Transverse colon (tissue), 4 donors: ENCODE measurements at regions of chr9 and their contacts with region 1.

Region 1: DNA sequence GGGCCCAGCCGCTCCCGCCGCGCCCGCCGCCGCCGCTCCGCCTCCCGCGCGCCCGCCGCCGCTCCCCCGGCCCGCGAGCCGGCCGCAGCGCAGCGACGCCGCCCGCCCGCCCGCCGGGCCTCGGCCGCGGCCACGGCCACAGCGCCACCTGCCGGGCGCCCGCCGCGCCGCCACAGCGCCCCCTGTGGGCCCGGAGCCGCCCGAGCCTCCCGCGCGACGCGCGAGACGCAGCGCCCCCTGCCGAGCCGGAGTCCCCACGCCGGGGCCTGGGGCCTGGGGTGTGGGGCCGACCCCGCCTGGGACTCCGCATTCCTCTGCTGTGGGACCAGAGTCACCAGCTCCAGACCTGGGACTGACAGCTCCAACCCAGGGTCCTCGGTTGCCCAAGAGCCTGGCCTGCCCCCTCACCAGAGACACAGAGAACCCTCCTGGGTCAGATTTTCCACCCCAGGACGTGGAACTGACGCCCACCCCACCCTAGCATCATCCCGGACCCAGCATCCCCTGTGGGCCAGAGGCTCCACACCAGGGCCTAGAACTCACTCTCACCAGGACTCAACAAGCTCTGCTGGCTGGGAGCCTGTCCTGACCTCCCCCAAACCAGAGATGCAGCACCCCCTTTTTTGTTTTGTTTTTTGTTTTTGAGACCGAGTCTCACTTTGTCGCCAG is at the start of gene RAPGEF1:
- DNase-seq: peak; percentile 77
- H3K4me3 ChIP-seq: peak within 1 kb of the TSS; percentile 21 to 83 (median 72)
- H3K27ac ChIP-seq: peak within 1 kb of the TSS; percentile 86 to 93 (median 88)
- H3K4me1 ChIP-seq: peaks cover 26 to 44% (median 32%) of the 10 kb centered on the region in 4 donors
- H3K27me3 ChIP-seq: no peaks in the 10 kb centered on the region
- CTCF ChIP-seq: peak; percentile 66 to 88 (median 85)
- EP300 ChIP-seq: no peak
- POLR2A ChIP-seq: no peak
- total RNA-seq, gene RAPGEF1: 49.8 to 86.0 (median 55.1) TPM

Region 2: GRCh38 chr9:131266266-131267229 is 473.6 kb before region 1 on chr9:
- in situ Hi-C with region 1: no loop called
- intact Hi-C with region 1: no loop called
- DNase-seq: no peak
- H3K4me3 ChIP-seq: no peak overlapping the region
- H3K27ac ChIP-seq: peak overlapping the region in 3 of 4 donors; percentile 1 to 37 (median 3)
- H3K4me1 ChIP-seq: peaks cover 0 to 22% (median 3%) of the 10 kb centered on the region in 4 donors
- H3K27me3 ChIP-seq: no peaks in the 10 kb centered on the region
- CTCF ChIP-seq: no peak
- EP300 ChIP-seq: no peak
- POLR2A ChIP-seq: no peak

Region 3: DNA sequence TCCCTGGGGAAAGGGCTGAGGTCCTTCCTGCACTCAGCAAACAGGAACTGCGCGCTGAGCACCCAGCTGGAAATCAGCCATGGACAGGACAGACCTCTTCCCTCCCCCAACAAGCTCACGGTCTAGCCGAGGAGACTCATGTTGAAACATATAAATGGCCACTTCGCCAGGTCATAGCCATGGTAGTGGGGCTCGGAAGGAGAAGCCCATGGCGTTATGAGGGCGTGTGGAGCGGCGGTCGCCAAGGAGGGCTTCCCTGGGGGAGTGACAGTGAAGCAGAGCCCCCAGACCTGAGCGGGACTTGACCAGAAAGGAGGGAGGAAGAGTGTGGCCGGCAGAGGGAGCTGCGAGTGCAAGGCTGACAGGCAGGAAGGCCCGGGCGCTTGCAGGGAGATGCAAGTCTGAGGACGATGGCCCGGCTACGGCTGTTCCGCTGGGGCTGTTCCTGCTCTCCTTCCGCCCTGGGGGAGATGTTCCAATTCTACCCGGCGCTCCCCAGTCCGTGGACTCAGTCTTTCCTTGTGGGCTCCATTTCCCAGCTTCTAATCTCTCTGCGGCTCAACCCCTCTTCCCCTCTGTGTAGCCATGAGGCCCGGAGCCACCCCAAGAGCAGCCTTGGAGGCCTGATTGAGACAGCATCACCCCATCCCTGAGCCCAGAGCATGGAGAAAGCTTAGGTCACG is 390.1 kb before region 1 on chr9:
- in situ Hi-C with region 1: loop called in 3 of 4 experiments (anchors 25 kb)
- intact Hi-C with region 1: no loop called
- DNase-seq: peak; percentile 89
- H3K4me3 ChIP-seq: peak overlapping the region in 1 of 4 donors; percentile 20
- H3K27ac ChIP-seq: no peak overlapping the region
- H3K4me1 ChIP-seq: peaks cover 0 to 10% (median 7%) of the 10 kb centered on the region in 4 donors
- H3K27me3 ChIP-seq: no peaks in the 10 kb centered on the region
- CTCF ChIP-seq: peak; percentile 76 to 85 (median 84)
- EP300 ChIP-seq: no peak
- POLR2A ChIP-seq: no peak

Region 4: DNA sequence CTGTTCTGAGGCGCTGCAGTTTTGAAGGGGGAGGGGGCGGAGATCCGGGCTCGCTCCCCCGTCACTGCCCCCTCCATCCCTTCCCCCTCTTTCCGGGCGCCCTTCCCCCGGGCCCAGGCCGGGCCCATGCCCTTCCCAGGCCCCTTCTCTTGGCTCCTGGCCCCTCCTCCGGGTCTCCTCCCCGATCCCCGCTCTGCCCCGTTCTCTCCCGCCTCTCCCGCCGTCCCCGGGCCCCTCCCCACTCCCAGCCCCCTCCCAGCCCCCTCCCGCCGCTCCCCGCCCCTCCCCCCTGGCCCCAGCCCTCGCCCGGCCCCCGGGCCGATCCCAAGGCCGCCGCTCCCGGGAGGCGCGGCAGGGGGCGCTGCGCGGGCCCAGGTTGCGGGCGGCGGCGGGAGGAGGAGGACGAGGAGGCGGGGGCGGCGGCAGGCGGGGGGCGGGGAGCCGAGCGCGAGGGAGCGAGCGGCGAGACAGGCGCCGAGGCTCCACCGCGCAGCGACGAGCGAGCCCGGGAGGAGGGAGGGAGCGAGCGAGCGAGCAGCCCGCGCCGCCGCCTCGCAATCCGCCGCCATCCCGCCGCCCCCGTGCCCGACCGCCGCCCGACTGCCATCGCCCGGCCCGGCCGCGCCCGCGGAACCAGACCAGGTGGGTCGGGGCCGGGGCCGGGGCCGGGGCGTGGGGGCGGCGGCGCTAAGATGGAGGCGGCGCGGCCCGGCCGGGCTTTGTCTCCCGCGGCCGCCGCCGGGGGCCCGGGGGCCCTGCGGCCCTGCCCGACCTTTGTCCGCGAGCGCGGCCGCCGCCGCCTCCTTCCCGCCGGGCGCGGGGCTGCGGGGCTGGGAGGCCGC is 346.3 kb before region 1 on chr9 and contains the start of gene PRRC2B:
- in situ Hi-C with region 1: loop called in 1 of 4 experiments (anchors 25 kb)
- intact Hi-C with region 1: no loop called
- DNase-seq: peak; percentile 89
- H3K4me3 ChIP-seq: peak within 1 kb of the TSS; percentile 75 to 98 (median 82)
- H3K27ac ChIP-seq: peak within 1 kb of the TSS; percentile 98 to 100 (median 99)
- H3K4me1 ChIP-seq: peaks cover 30 to 49% (median 43%) of the 10 kb centered on the region in 4 donors
- H3K27me3 ChIP-seq: no peaks in the 10 kb centered on the region
- CTCF ChIP-seq: peak in 3 of 5 experiments; percentile 46 to 63 (median 56)
- EP300 ChIP-seq: no peak
- POLR2A ChIP-seq: no peak
- total RNA-seq, gene PRRC2B: 73.7 to 171 (median 98.9) TPM

Region 5: GRCh38 chr9:131478421-131478868 is 261.7 kb before region 1 on chr9:
- in situ Hi-C with region 1: loop called in 1 of 4 experiments (anchors 25 kb)
- intact Hi-C with region 1: no loop called
- DNase-seq: peak; percentile 44
- H3K4me3 ChIP-seq: no peak overlapping the region
- H3K27ac ChIP-seq: no peak overlapping the region
- H3K4me1 ChIP-seq: no peaks in the 10 kb centered on the region
- H3K27me3 ChIP-seq: no peaks in the 10 kb centered on the region
- CTCF ChIP-seq: peak; percentile 50 to 63 (median 57)
- EP300 ChIP-seq: no peak
- POLR2A ChIP-seq: no peak

Region 6: GRCh38 chr9:131590908-131591844 is 148.9 kb before region 1 on chr9:
- in situ Hi-C with region 1: loop called (anchors 5 to 10 kb)
- intact Hi-C with region 1: loop called (anchors 2 kb)
- DNase-seq: peak; percentile 85
- H3K4me3 ChIP-seq: no peak overlapping the region
- H3K27ac ChIP-seq: no peak overlapping the region
- H3K4me1 ChIP-seq: peaks cover 0 to 6% (median 0%) of the 10 kb centered on the region in 4 donors
- H3K27me3 ChIP-seq: no peaks in the 10 kb centered on the region
- CTCF ChIP-seq: peak; percentile 71 to 96 (median 84)
- EP300 ChIP-seq: no peak
- POLR2A ChIP-seq: no peak

Region 7: DNA sequence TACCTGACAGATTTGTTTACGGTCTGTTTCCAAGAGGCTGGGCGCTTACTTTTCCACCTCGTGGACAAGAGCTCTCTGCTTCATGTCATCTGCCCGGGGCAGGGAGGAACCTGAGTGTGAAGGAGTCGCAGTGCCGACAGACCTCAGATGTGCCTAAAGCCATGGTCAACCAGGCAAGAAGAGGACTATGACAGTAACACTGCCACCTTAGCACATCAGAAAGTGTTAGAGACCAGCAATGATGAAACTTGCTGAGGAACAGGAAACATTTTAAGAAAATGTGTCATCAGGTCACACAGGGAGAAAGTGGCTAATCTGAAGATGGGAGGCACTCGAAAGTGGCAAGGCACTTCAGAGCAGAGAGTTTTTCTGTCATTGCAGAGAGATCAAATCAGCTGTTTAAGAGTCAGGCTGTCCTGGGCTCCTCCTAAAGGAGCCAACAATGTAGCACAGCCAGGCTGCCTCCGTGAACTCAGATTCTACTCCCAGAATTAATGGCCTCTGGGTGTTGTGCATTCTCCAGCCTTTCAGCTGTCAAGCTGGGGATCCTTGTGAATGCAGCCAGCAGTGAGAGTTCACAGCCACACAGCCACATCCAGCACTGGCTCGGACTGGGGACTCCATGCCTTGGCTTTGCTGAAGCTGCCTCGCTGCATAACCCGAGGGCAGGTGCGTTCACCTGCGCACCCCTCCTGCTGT is 94.9 kb before region 1 on chr9:
- in situ Hi-C with region 1: no loop called
- intact Hi-C with region 1: loop called (anchors 5 kb)
- DNase-seq: no peak
- H3K4me3 ChIP-seq: no peak overlapping the region
- H3K27ac ChIP-seq: peak overlapping the region in 3 of 4 donors; percentile 19 to 42 (median 42)
- H3K4me1 ChIP-seq: peaks cover 15 to 40% (median 32%) of the 10 kb centered on the region in 4 donors
- H3K27me3 ChIP-seq: no peaks in the 10 kb centered on the region
- CTCF ChIP-seq: no peak
- EP300 ChIP-seq: no peak
- POLR2A ChIP-seq: no peak

Region 8: DNA sequence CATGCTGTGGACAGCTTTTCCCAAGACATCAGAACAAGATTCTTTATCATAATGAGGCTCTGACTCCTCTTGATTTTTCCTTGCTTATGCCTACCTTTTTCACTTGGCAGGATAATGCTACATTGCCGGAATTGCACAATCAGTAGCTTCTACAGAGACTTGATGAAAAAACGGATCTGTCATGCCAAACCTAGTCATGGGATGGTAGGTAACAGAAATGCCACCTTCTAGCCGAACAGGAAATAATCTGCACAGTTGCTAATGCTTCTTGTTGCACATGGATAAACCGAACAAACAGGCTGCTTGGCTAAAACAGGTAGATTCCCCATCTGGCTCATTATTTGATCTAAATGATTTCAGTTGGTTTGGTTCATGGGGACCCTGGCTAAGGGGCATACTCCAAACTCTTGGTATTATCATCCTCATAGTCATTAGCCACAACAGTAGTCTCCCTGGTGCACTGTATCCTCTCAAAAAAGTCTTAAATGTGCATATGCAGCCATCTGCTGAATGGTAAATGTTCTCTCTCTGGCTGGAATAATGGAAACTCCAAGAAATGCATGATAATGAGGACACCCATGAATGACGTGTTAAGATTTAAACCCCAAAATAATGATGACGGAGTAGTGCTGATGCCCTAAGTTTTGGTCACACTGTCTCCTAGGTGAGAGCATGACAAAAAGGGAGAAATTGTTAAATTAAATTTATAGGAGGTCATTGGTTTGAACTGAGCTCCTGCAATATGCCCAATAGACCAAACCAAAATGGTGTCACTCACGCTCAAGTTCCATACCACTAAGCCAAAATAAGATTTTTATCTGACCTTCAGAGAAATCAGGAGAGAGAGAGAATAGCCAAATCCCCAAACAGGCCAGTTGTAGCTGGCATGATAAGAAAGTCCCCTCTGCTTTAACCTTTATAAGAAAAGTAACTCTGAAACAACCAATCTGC is 47.2 kb before region 1 on chr9:
- in situ Hi-C with region 1: no loop called
- intact Hi-C with region 1: no loop called
- DNase-seq: no peak
- H3K4me3 ChIP-seq: no peak overlapping the region
- H3K27ac ChIP-seq: no peak overlapping the region
- H3K4me1 ChIP-seq: peaks cover 7 to 21% (median 13%) of the 10 kb centered on the region in 4 donors
- H3K27me3 ChIP-seq: no peaks in the 10 kb centered on the region
- CTCF ChIP-seq: no peak
- EP300 ChIP-seq: no peak
- POLR2A ChIP-seq: no peak

Region 9: GRCh38 chr9:131709771-131710454 is 30.2 kb before region 1 on chr9:
- in situ Hi-C with region 1: no loop called
- intact Hi-C with region 1: no loop called
- DNase-seq: no peak
- H3K4me3 ChIP-seq: no peak overlapping the region
- H3K27ac ChIP-seq: peak overlapping the region; percentile 44 to 67 (median 60)
- H3K4me1 ChIP-seq: peaks cover 12 to 75% (median 45%) of the 10 kb centered on the region in 4 donors
- H3K27me3 ChIP-seq: no peaks in the 10 kb centered on the region
- CTCF ChIP-seq: no peak
- EP300 ChIP-seq: no peak
- POLR2A ChIP-seq: no peak